ENCODE measurements at regions of chr14 and their contacts with region 1.

Region 1: DNA sequence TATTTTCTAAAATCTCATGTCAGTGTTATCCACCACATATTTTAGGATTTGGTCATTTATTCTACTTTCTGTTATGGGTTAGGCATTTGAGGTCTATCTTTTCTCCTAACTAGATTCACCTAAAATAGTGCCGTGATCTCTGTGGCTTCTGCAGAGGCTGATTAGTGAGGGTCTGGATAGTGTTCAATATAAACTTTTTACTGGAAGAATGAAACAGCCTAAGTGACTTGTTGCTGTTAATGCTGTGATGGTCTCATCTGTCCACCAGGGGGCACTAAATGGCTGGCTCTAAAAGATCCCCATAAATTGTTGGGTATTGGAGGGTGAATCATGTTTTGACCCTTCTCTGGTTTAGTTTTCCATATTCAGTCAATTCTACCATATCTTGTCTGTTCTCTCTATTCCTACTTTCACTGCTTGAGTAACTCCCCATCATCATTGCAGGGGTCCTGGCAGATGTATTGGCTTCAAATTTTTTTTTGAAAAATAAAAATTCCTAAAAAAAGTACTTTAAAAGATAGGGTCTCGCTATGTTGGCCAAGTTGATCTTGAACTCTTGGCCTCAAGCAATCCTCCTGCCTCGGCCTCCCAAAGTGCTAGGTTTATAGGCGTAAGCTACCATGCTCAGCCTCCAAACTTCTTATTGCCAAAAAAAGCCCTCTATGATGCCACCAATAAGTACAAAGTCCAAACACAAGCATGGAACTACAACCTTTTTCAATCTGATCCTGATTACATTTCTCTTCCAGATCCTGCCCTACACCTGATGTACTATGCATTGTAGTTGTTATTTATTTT is 6.9 kb downstream of the PABPN1 start:
- DNase-seq: peak in 40 of 42 donors; percentile 68 to 94 (median 82)

Region 2: GRCh38 chr14:23120541-23121251 is 207.4 kb before region 1 on chr14:
- intact Hi-C with region 1: no loop called
- DNase-seq: peak; percentile 86 to 96 (median 91)

Region 3: GRCh38 chr14:23379366-23380196 is 51.4 kb after region 1 on chr14:
- intact Hi-C with region 1: loop called (anchors 2 kb)
- DNase-seq: peak in 35 of 42 donors; percentile 8 to 85 (median 60)

Measured in head of caudate nucleus (tissue), 42 donors.